Activated B cell treated with CpG ODN at 0.5 μM for 24 hours (primary cell): ENCODE measurements at regions of chr7 and their contacts with region 1.

Region 1: DNA sequence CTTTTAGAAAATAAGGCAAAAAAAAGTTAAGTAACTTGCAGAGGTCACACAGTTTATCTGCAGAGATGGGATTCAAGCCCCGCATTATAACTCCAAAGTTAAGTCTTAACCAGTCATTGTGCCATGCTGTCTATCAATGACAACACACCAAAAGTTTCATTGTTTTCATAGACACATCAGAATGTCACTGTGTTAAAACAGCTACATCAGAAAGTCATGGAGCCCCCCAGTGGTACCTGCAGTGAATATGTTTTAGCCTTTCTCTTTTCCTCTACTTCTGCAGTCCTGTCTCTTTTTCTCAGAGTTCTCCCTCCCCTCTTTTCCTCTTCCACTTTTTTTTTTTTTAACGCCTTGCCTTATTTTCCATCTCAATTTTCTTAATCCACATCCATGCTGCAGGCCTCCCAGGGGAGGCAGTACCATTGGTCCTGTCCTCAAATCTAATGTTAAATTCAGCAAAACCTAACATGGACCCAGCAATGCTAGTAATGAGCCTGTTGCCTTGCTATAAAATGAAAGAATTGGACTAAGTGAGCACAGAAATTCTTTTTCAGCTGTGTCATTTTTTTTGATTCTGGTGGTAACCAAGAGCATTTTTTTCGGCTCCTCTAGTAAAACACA is 3.8 kb upstream of the NRCAM start:
- DNase-seq: no peak
- ATAC-seq: peak; percentile 36
- H3K4me3 Mint-ChIP-seq: no peak overlapping the region
- H3K27ac Mint-ChIP-seq: peak overlapping the region; percentile 12
- H3K4me1 Mint-ChIP-seq: peaks cover 11% of the 10 kb centered on the region
- H3K27me3 Mint-ChIP-seq: peaks cover 42% of the 10 kb centered on the region
- CTCF ChIP-seq: no peak

Region 2: DNA sequence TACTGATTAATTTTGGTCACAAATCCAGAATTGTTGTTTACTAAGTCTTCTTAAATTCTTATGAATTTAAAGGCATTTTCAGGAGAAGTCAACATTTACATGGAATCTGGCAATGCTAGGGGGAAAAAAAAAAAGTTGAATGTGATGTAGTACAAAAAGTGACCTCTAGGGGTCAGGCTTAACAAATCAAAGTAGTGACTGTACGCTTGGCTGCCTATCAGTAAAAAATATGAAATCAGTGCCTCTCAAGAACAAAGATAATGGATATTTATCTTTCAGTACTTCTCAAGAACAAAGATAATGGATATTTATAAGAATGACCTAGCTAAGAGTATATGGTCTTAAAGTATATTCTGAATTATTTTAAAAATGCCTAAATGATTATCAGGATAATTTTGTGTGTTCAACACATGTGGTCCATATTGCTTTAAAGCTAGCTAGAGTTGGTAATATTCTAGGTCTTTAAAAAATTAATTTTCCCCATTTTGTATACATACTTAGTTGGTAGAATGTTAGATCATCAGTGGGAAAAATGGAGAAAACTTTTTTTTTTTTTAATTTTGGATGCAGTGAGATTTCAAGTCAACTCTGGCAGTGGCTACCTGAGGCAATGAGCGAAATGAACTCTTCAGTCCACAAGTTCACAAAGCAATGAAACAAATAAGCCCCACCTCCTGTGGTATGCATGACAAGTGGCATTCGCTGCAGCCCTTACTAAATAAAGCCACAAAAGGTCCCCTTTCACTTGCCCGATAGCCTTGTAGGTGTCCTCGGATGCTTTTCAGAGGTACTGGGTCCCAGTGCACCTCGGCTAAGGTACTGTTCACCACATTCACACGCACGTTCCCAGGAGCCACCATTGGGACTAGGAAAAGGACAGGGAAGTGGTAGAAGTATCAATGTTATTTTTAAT is 278.7 kb before region 1 on chr7:
- CTCF ChIA-PET with region 1: interaction called, 30 read pairs
- POLR2A ChIA-PET with region 1: no interaction called
- intact Hi-C with region 1: loop called (anchors 1 kb)
- DNase-seq: no peak
- ATAC-seq: peak; percentile 60
- H3K4me3 Mint-ChIP-seq: no peak overlapping the region
- H3K27ac Mint-ChIP-seq: no peak overlapping the region
- H3K4me1 Mint-ChIP-seq: no peaks in the 10 kb centered on the region
- H3K27me3 Mint-ChIP-seq: no peaks in the 10 kb centered on the region
- CTCF ChIP-seq: peak; percentile 75

Region 3: DNA sequence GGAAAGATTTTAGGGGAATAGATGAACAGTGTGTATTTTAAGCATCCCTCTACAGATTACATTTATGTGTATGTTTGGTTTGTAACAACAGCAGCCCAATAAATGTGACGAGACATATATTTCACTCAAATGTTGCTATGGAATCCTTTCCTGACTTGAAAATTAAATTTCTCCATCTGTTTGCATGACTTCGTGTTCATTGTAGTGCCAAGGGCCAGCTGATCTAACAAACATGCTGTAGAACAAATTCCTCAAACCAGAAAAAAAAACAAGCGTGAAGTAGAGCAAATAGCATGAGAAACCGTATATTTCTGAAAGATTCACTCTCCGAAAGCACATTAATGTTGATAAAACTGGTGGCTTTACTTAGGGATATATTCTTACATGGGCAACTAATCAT is 91.6 kb before region 1 on chr7:
- CTCF ChIA-PET with region 1: no interaction called
- POLR2A ChIA-PET with region 1: no interaction called
- intact Hi-C with region 1: no loop called
- DNase-seq: no peak
- ATAC-seq: no peak
- H3K4me3 Mint-ChIP-seq: no peak overlapping the region
- H3K27ac Mint-ChIP-seq: no peak overlapping the region
- H3K4me1 Mint-ChIP-seq: peaks cover 4% of the 10 kb centered on the region
- H3K27me3 Mint-ChIP-seq: peaks cover 7% of the 10 kb centered on the region
- CTCF ChIP-seq: no peak

Region 4: GRCh38 chr7:108515013-108515412 is 55.0 kb after region 1 on chr7:
- CTCF ChIA-PET with region 1: no interaction called
- POLR2A ChIA-PET with region 1: no interaction called
- intact Hi-C with region 1: no loop called
- DNase-seq: no peak
- ATAC-seq: no peak
- H3K4me3 Mint-ChIP-seq: no peak overlapping the region
- H3K27ac Mint-ChIP-seq: peak overlapping the region; percentile 30
- H3K4me1 Mint-ChIP-seq: peaks cover 58% of the 10 kb centered on the region
- H3K27me3 Mint-ChIP-seq: no peaks in the 10 kb centered on the region
- CTCF ChIP-seq: no peak